Prostate gland (tissue), 2 donors: ENCODE measurements at regions of chr15 and their contacts with region 1.

Region 1: GRCh38 chr15:44286814-44287452 is 1.6 kb upstream of the GOLM2 start:
- DNase-seq: no peak
- H3K4me3 ChIP-seq: peak overlapping the region; percentile 84 to 85
- H3K27ac ChIP-seq: peak overlapping the region in 1 of 2 donors; percentile 89
- H3K4me1 ChIP-seq: no peaks in the 10 kb centered on the region
- H3K27me3 ChIP-seq: no peaks in the 10 kb centered on the region
- CTCF ChIP-seq: peak in 2 of 4 experiments; percentile 29 to 34
- POLR2A ChIP-seq: no peak

Region 2: GRCh38 chr15:44426975-44427755 is 140.2 kb after region 1 on chr15 and contains the start of gene CTDSPL2:
- intact Hi-C with region 1: loop called (anchors 2 kb)
- DNase-seq: peak; percentile 98
- H3K4me3 ChIP-seq: peak within 1 kb of the TSS; percentile 61 to 68
- H3K27ac ChIP-seq: peak within 1 kb of the TSS; percentile 92 to 94
- H3K4me1 ChIP-seq: no peaks in the 10 kb centered on the region
- H3K27me3 ChIP-seq: no peaks in the 10 kb centered on the region
- CTCF ChIP-seq: peak in 3 of 4 experiments; percentile 34 to 63 (median 50)
- POLR2A ChIP-seq: peak; percentile 48
- total RNA-seq, gene CTDSPL2: 32.5 to 67.5 TPM

Region 3: DNA sequence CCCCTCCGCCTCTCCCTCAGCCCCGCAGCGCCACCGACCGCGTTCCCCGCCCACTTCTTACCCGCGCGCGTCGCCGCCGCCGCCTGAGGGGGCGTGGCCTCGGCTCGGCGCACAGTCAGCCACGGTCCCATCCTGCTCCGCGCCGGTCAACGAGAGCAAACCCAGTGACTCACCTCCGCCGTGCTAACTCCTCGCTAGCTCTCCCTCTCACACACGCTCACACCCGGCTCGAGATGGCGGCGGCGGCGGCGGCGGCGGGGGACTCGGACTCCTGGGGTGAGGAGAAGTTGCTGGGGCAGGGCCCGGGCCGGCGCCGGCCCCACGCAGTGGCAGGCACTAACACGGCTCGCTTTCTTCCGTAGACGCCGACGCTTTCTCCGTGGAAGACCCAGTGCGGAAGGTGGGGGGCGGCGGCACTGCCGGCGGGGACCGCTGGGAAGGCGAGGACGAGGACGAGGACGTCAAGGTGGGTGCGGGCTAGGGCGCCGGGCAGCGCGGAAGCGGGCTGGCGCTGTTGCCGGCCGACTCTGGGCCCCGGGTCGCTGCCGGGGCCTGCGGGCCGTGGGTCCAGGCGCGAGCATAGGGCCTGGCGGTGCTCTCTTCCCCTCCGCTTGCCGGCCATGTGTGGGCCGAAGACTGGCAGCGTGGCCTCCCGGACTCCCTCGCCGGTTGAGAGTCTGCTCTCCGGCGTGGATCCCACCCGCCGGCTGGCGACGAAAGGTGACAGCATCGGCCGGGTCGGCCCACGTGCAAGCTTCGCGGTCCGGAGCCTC is 250.2 kb after region 1 on chr15 and contains the start of gene EIF3J:
- intact Hi-C with region 1: loop called (anchors 2 kb)
- DNase-seq: peak; percentile 96
- H3K4me3 ChIP-seq: peak within 1 kb of the TSS; percentile 75 to 95
- H3K27ac ChIP-seq: peak within 1 kb of the TSS; percentile 94
- H3K4me1 ChIP-seq: peaks cover 1% of the 10 kb centered on the region
- H3K27me3 ChIP-seq: no peaks in the 10 kb centered on the region
- CTCF ChIP-seq: peak in 1 of 4 experiments; percentile 35
- POLR2A ChIP-seq: peak; percentile 70
- total RNA-seq, gene EIF3J: 33.1 to 51.7 TPM